Right cardiac atrium (tissue), 5 donors: ENCODE measurements at regions of chr3 and their contacts with region 1.

Region 1: DNA sequence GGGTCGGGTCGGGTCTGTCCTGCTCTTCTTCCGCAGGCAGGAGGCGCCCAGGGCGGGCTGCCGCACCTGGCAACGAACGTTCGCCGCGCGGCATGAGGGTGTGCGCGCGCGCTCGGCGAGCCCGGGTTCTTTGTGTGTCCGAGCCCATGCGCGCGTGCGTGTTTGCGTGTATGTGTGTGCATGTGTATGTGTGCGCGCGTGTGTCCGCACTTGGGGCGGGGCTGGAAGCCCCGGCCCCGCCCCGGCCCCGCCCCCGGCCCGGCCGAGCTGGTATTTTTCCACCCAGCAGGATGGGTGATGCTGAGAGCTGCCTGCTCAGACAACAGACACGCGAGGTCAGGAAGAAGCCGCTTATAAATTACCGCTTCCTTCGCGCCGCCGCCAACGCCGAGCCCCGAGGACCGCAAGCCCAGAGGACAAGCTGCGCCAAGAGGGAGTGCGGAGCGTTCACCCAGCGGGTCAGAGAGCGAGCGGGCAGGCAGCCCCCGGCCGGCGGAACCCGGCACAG is at the start of gene SLC6A6:
- DNase-seq: peak; percentile 94 to 99 (median 97)
- ATAC-seq: peak; percentile 84 to 90
- H3K4me3 ChIP-seq: peak within 1 kb of the TSS; percentile 78
- H3K27ac ChIP-seq: peak within 1 kb of the TSS; percentile 95
- H3K4me1 ChIP-seq: peaks cover 11% of the 10 kb centered on the region
- H3K27me3 ChIP-seq: no peaks in the 10 kb centered on the region
- total RNA-seq, gene SLC6A6: 21.3 to 106 (median 38.4) TPM

Region 2: GRCh38 chr3:14452679-14453367 is 50.5 kb after region 1 on chr3:
- intact Hi-C with region 1: loop called in 2 of 4 experiments (anchors 10 kb)
- DNase-seq: peak; percentile 94 to 96 (median 96)
- ATAC-seq: peak; percentile 93 to 94
- H3K4me3 ChIP-seq: no peak overlapping the region
- H3K27ac ChIP-seq: peak overlapping the region; percentile 40
- H3K4me1 ChIP-seq: peaks cover 23% of the 10 kb centered on the region
- H3K27me3 ChIP-seq: no peaks in the 10 kb centered on the region

Region 3: DNA sequence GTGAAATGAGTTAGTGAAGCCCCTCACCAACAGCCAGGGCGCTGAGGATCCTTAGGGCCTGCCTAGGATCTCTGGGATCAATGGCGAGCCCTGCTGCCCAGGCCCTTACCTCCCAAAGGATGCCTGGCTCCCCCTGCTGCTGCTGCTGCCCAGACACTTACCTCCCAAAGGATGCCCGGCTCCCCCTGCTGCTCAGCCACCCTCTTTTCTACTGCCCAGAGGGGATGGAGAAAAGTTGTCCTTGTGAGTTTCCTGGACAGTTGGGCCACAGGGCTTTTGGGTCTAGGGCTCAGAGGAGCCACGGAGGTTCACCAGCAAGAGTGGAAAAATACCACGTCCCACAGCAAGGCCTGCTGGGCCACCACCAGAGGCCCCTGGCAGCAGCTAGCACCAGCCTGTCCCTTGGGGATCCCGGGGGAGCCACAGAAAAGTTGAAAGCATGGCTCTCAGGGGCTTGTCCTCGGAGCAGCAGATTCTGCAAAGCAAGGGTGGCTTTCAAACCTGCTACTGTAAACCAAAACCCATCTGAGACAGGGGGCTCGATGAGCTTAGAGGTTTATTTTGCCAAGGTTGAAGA is 59.5 kb after region 1 on chr3:
- intact Hi-C with region 1: loop called in 3 of 4 experiments (anchors 10 kb)
- DNase-seq: peak in 2 of 3 donors; percentile 76 to 82
- ATAC-seq: peak; percentile 27 to 31
- H3K4me3 ChIP-seq: no peak overlapping the region
- H3K27ac ChIP-seq: no peak overlapping the region
- H3K4me1 ChIP-seq: peaks cover 8% of the 10 kb centered on the region
- H3K27me3 ChIP-seq: no peaks in the 10 kb centered on the region